Activated naive CD4-positive, alpha-beta T cell treated with anti-CD3 and anti-CD28 coated beads for 36 hours (primary cell): ENCODE measurements at regions of chr3 and their contacts with region 1.

Region 1: DNA sequence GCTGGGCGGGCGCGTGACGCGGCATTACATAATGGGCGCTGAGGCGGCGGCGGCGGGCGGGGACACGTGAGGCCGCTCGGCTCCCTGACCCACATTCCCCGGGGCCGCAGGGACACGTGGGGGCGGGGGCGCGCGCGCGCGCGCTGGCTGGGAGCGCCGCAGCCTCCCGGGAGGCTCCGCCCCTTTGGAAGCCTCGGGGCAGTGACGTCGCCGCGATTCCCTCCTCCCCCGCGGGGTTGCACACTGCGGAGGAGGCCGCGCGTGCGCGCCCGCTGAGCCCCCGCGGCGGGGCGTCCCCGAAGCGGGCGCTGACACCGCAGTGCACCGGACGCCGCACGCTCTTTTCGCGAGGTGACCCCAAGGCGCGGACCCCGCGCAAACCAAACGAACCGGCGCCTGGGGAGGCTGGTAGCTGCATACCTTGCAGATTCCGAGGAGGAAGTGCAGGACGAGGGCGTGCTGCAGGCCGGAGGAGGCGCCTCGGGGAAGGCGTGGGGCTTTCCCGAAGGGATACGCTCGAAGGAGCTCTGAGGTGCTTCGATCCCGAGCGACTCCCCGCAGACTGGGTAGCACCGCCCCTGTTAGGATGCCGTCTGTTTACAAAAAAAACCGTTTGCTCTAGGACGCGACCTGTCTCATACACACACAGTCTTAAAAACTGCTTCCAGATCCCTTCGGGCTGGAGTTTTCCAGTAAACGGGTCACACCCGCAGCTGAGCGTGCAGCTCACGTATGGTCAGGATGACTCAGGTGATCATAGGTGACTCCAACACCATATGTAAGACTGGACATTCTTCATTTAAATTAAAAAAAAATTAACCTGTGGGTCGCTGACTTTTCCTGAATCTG is 1.0 kb downstream of the NR1D2 start:
- DNase-seq: peak; percentile 96
- H3K4me3 Mint-ChIP-seq: peak overlapping the region; percentile 80
- H3K27ac Mint-ChIP-seq: peak overlapping the region; percentile 85
- H3K4me1 Mint-ChIP-seq: peaks cover 42% of the 10 kb centered on the region
- H3K27me3 Mint-ChIP-seq: peaks cover 4% of the 10 kb centered on the region

Region 2: GRCh38 chr3:23202921-23203707 is 743.0 kb before region 1 on chr3 and contains the start of gene UBE2E2:
- CTCF ChIA-PET with region 1: no interaction called
- intact Hi-C with region 1: loop called (anchors 1 kb)
- DNase-seq: peak; percentile 58
- H3K4me3 Mint-ChIP-seq: peak within 1 kb of the TSS; percentile 83
- H3K27ac Mint-ChIP-seq: peak within 1 kb of the TSS; percentile 50
- H3K4me1 Mint-ChIP-seq: peaks cover 18% of the 10 kb centered on the region
- H3K27me3 Mint-ChIP-seq: peaks cover 6% of the 10 kb centered on the region
- total RNA-seq, gene UBE2E2: 11.6 to 14.0 TPM

Region 3: DNA sequence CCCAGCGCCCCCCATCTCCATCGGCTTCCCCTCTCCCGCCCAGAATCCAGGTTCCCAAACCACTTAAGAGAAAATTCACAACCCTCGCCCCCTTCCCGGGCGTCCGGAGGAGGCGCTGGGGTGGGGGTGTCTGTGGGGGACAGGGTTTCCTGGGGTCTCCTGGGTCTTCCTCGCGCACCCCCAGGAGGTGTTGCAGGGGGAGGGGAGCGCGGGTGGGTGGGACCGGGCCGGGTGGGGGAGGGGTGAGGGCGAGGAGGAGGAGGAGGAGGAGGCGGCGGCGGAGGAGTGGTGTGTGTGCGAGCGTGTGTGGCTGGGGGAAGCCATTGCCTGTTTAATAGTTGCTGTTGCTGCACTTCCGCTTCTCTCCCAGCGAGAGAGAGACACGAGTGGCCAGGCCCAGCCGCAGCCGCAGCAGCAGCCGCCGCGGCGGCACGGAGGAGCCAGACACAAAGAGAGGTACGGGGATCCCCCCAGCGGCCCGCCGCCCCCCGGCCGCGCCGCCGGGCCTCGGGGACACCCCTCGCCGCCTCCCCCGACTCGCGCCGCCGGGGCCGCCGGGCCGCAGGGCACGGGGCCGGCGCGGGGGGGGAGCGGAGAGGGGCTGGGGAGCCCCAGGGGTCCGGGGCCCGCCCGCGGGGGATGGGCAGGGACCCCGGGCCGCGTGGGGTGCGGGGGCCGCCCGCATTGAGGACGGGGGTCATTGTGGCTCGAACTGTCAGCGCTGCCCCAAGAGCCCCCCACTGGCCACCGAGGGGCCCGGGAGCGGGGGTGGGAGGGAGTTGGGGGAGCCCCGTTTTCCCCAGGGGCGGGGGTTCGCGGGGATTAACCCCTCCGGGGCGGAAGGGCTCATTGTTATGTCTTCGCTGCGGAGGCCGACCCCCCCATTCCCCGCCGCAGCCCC is 140.2 kb before region 1 on chr3 and contains the start of gene UBE2E1:
- CTCF ChIA-PET with region 1: no interaction called
- intact Hi-C with region 1: loop called (anchors 1 kb)
- DNase-seq: peak; percentile 73
- H3K4me3 Mint-ChIP-seq: peak within 1 kb of the TSS; percentile 91
- H3K27ac Mint-ChIP-seq: peak within 1 kb of the TSS; percentile 89
- H3K4me1 Mint-ChIP-seq: peaks cover 36% of the 10 kb centered on the region
- H3K27me3 Mint-ChIP-seq: peaks cover 7% of the 10 kb centered on the region
- total RNA-seq, gene UBE2E1: 66.0 to 66.6 TPM

Region 4: DNA sequence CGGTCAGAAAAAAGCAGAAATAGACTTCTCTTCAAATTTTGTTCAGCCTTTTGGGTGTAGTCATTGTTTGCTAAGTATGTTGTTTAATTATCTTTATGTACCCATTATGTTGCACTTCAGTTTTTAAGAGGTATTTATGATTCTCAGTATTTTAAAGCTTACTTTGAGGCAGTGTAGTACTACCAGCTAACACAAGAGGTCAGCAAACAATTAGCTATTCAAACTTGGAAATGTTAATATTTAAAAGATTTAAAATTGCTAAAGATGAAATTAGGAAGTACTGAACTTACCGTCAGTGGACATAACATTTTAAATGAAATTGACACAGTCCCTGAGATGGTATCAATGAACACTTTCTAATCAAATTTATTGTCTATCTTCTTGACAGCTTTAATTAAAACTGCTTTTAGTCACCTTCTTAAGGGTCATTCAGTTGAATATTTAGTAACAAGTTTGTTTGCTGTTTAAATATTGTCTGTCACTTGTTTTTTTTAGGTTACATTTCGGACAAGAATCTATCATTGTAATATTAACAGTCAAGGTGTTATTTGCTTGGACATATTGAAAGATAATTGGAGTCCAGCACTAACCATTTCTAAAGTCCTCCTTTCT is 57.4 kb before region 1 on chr3:
- CTCF ChIA-PET with region 1: interaction called, 3 read pairs
- intact Hi-C with region 1: loop called (anchors 1 kb)
- DNase-seq: no peak
- H3K4me3 Mint-ChIP-seq: no peak overlapping the region
- H3K27ac Mint-ChIP-seq: no peak overlapping the region
- H3K4me1 Mint-ChIP-seq: no peaks in the 10 kb centered on the region
- H3K27me3 Mint-ChIP-seq: no peaks in the 10 kb centered on the region

Region 5: DNA sequence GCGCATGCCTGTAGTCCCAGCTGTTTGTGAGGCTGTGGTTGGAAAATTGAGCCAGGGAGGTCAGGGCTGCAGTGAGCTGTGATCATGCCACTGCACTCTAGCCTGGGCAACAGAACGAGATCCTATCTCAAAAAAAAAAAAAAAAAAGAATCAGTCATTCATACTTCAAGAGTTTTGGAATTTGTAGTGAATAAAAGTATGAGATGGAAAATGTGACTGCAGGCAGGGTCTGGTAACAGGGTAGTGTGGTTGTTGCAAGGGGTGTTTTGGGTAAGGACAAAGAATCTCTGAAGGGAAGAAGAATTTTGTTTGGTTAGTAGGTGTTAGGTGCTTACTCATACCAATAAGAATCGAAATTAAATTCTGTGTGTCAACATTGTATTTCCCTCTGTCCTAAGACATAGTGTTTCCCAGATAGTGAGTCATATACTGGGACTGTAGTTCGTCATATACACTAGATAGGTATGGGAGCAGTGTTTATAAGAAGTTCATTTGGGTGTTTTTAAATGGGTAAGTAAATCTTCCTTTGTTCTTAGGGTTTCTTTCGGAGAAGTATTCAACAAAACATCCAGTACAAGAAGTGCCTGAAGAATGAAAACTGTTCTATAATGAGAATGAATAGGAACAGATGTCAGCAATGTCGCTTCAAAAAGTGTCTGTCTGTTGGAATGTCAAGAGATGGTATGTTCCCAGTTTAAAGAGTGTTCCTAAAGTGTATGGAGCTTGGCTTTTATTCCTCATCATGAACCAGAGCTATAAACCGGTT is 13.2 kb after region 1 on chr3:
- CTCF ChIA-PET with region 1: interaction called, 4 read pairs
- intact Hi-C with region 1: loop called (anchors 1 kb)
- DNase-seq: peak; percentile 37
- H3K4me3 Mint-ChIP-seq: no peak overlapping the region
- H3K27ac Mint-ChIP-seq: peak overlapping the region; percentile 4
- H3K4me1 Mint-ChIP-seq: peaks cover 27% of the 10 kb centered on the region
- H3K27me3 Mint-ChIP-seq: no peaks in the 10 kb centered on the region

Region 6: DNA sequence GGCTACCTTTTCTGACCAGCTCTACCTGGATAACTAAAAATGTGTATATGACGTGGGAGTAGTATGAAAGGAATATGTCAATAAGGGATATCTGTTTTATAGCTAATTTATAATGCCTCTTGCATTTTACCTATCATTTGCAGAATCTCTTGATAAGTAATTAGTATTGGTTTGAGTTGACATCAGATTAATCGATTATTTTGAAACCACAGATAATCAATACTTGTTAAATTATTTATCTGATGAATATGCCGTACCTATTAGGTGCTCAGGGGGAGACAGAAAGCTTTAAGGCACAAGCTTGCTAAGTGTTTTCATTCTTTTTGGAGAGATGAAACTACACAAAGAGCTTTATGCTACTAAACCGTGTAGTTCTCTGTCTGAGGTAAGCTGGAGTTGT is 23.3 kb after region 1 on chr3:
- CTCF ChIA-PET with region 1: no interaction called
- intact Hi-C with region 1: no loop called
- DNase-seq: no peak
- H3K4me3 Mint-ChIP-seq: no peak overlapping the region
- H3K27ac Mint-ChIP-seq: no peak overlapping the region
- H3K4me1 Mint-ChIP-seq: peaks cover 4% of the 10 kb centered on the region
- H3K27me3 Mint-ChIP-seq: no peaks in the 10 kb centered on the region

Region 7: DNA sequence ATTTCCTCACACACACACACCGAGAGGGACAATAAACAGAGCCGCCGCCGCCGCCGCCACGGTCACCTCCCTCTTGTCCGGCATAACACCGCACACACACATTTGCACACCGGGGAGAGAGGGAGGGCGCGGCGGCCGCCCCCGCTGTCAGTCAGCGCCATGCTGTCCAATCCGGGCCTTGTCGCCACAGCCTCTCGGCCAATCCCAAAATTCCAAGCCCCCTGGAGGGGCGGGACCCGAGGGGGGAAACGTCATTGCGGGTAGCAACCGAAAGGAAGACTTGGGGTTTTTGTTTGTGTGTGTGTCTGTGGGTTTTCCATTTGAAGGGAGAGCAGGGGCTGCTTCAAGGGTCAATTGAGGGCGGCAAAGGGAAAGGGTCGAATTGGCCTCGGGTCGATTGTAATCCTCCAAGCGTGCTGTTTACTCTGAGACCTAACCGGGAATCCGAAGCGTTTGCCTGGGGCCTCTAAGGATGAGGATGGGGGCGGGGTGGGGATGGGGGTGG is 1718.7 kb after region 1 on chr3 and contains the start of gene TOP2B:
- CTCF ChIA-PET with region 1: no interaction called
- intact Hi-C with region 1: loop called (anchors 5 kb)
- DNase-seq: peak; percentile 97
- H3K4me3 Mint-ChIP-seq: peak within 1 kb of the TSS; percentile 92
- H3K27ac Mint-ChIP-seq: peak within 1 kb of the TSS; percentile 100
- H3K4me1 Mint-ChIP-seq: peaks cover 42% of the 10 kb centered on the region
- H3K27me3 Mint-ChIP-seq: no peaks in the 10 kb centered on the region
- total RNA-seq, gene TOP2B: 113 to 114 TPM